IMR-90 (cell line): ENCODE measurements at regions of chr9 and their contacts with region 1.

Region 1: DNA sequence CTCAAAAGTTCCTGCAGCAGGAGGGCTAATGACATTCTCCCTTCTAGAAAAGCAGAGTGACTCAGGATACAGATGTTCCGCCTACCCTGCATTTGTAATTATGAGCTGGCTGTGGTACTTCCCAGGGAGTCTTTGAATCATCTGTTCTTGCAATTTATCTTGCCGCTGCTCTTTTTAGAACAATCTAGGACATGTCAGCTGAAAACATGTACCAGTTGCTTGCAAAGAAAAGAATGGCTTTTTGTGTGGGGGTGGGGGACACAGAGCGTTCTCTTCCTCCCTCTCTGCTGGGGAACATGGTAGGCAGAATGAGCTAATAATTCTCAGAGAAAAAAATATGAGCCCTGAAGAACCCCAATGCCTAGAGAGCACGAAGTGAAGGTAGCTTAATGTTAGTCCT is 51.7 kb upstream of the TUT7 start:
- DNase-seq: peak; percentile 95
- ATAC-seq: peak; percentile 68
- H3K4me3 ChIP-seq: peak overlapping the region; percentile 8; the same call in 1 of the 2 replicates
- H3K27ac ChIP-seq: peak overlapping the region; percentile 55
- H3K4me1 ChIP-seq: peaks cover 17% of the 10 kb centered on the region
- H3K27me3 ChIP-seq: no peaks in the 10 kb centered on the region
- CTCF ChIP-seq: no peak
- POLR2A ChIP-seq: no peak
- RAD21 ChIP-seq: no peak

Region 2: DNA sequence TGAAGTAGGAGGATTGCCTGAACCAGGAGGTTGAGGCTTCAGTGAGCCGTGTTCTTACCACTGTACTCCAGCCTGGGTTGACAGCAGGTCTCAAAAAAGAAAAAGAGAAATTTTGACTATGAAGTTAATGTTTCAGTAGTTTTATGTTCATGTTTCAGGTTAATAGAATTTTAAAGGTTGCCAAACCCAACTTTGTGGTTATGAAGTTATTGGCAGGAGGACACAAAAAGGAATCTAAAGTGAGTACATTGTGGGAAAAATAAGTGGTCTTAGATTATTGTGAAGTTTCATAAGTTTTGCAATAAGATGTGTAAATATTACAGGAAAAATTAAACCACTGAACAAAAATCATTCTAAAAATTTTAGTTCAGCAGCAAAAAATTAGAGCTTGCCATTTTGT is 385.2 kb before region 1 on chr9:
- CTCF ChIA-PET with region 1: no interaction called
- POLR2A ChIA-PET with region 1: no interaction called
- dilution Hi-C with region 1: no loop called
- in situ Hi-C with region 1: no loop called
- intact Hi-C with region 1: no loop called
- DNase-seq: no peak
- ATAC-seq: no peak
- H3K4me3 ChIP-seq: no peak overlapping the region
- H3K27ac ChIP-seq: no peak overlapping the region
- H3K4me1 ChIP-seq: no peaks in the 10 kb centered on the region
- H3K27me3 ChIP-seq: no peaks in the 10 kb centered on the region
- CTCF ChIP-seq: no peak
- POLR2A ChIP-seq: no peak
- RAD21 ChIP-seq: no peak

Region 3: GRCh38 chr9:86354011-86354817 is 51.7 kb before region 1 on chr9 and contains the start of gene TUT7:
- CTCF ChIA-PET with region 1: no interaction called
- POLR2A ChIA-PET with region 1: no interaction called
- dilution Hi-C with region 1: no loop called
- in situ Hi-C with region 1: no loop called
- intact Hi-C with region 1: loop called (anchors 1 kb)
- DNase-seq: peak; percentile 93
- ATAC-seq: peak; percentile 96
- H3K4me3 ChIP-seq: peak within 1 kb of the TSS; percentile 93
- H3K27ac ChIP-seq: peak within 1 kb of the TSS; percentile 73
- H3K4me1 ChIP-seq: peaks cover 3% of the 10 kb centered on the region; the same call in 1 of the 2 replicates
- H3K27me3 ChIP-seq: no peaks in the 10 kb centered on the region
- CTCF ChIP-seq: no peak
- POLR2A ChIP-seq: peak; percentile 87
- RAD21 ChIP-seq: no peak; the same call in 1 of the 2 replicates
- total RNA-seq, gene TUT7: 33.3 and 58.3 TPM in 2 replicates